Transverse colon (tissue), 4 donors: ENCODE measurements at regions of chr9 and their contacts with region 1.

Region 1: DNA sequence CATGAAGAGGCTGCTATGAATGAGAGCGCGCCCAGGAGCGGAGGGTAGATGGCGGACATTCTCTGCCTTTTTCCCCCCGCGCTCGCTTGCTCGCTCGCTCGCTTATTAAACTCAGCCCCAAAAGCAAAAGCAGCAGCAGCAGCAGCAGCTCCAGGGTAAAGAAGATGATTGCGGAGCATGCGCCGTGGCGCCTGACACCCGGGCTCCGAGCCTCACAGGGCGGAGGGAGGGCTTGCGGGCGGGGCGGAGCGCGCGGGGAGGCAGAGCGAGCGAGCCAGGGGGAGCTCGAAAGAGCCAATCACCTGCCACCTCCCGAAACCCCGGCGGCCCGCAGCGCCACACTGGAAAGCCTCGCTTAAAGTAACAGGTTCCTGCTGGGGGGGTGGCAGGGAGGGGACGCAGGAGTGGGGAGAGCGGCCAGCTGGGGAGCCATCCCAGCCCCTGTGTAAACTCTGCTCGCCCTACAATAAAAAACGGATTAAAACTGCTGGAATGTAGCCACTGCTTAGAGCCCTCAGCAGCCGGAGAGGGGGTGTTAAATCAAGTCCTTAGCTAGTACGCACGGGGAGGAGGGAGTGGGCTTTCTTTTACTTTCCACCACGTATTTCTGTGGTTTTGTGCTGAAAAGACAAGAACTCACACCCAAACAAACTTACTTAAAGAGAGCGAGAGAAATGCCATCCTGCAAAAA is at the start of gene MLLT3:
- DNase-seq: peak; percentile 97
- H3K4me3 ChIP-seq: peak within 1 kb of the TSS; percentile 74 to 94 (median 85)
- H3K27ac ChIP-seq: peak within 1 kb of the TSS; percentile 90 to 98 (median 94)
- H3K4me1 ChIP-seq: peaks cover 9 to 42% (median 25%) of the 10 kb centered on the region in 4 donors
- H3K27me3 ChIP-seq: no peaks in the 10 kb centered on the region
- CTCF ChIP-seq: peak in 2 of 5 experiments; percentile 7 to 11
- EP300 ChIP-seq: no peak
- POLR2A ChIP-seq: peak; percentile 75
- total RNA-seq, gene MLLT3: 9.4 to 38.2 (median 30.2) TPM

Region 2: GRCh38 chr9:20356403-20357035 is 266.0 kb before region 1 on chr9:
- in situ Hi-C with region 1: loop called (anchors 10 to 25 kb)
- intact Hi-C with region 1: loop called (anchors 5 kb)
- DNase-seq: peak; percentile 74
- H3K4me3 ChIP-seq: peak overlapping the region in 1 of 4 donors; percentile 23
- H3K27ac ChIP-seq: peak overlapping the region; percentile 45 to 68 (median 64)
- H3K4me1 ChIP-seq: peaks cover 0 to 22% (median 16%) of the 10 kb centered on the region in 4 donors
- H3K27me3 ChIP-seq: no peaks in the 10 kb centered on the region
- CTCF ChIP-seq: peak; percentile 55 to 72 (median 67)
- EP300 ChIP-seq: no peak
- POLR2A ChIP-seq: no peak

Region 3: DNA sequence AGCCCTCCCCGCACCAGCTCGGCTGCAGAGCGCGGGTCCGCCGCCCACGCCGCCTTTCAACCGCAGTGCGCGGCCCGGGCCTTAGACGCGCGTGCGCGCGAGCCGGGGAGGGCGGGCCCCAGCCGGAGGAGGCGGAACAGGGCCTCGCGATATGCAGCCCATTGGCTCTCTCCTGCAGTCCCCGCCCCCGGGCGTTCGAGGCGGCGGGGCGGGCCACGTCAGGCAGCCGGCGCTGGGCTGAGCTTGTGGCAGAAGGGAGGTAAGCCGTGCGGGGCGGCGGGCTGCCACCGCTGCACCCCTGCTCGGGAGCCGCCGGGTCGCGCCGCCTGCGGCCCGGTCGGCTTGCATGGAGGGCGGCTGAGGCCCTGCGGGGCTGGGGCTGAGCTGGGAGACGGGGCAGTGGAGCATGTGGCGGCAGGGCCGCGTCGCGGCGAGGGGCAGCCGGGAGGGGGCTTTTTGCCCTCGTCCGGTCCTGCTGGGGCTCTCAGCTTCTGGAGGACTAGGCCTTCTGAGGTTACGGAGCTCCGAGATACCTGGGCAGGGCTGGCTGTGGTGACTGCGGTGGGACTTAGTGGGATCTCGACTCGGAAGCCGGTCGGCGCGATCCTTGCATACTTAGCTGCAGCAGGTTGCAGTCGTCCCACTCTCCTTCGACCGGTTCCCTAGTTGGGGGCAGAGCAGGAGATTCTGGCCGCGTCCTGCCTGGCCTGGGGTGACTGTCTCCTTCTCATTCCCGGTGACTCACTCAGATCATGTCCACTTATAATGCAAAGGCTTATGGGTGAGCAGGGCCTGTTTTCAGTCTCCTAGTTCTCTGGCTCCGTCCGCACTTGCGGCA is 61.8 kb after region 1 on chr9 and contains the start of gene FOCAD:
- in situ Hi-C with region 1: no loop called
- intact Hi-C with region 1: loop called (anchors 5 kb)
- DNase-seq: peak; percentile 97
- H3K4me3 ChIP-seq: peak within 1 kb of the TSS; percentile 80 to 91 (median 82)
- H3K27ac ChIP-seq: peak within 1 kb of the TSS; percentile 91 to 98 (median 95)
- H3K4me1 ChIP-seq: peaks cover 11 to 31% (median 14%) of the 10 kb centered on the region in 4 donors
- H3K27me3 ChIP-seq: no peaks in the 10 kb centered on the region
- CTCF ChIP-seq: peak in 1 of 5 experiments; percentile 22
- EP300 ChIP-seq: no peak
- POLR2A ChIP-seq: peak; percentile 88
- total RNA-seq, gene FOCAD: 7.8 to 41.2 (median 32.0) TPM

Region 4: GRCh38 chr9:20788526-20789451 is 166.3 kb after region 1 on chr9:
- in situ Hi-C with region 1: no loop called
- intact Hi-C with region 1: no loop called
- DNase-seq: no peak
- H3K4me3 ChIP-seq: no peak overlapping the region
- H3K27ac ChIP-seq: no peak overlapping the region
- H3K4me1 ChIP-seq: no peaks in the 10 kb centered on the region
- H3K27me3 ChIP-seq: no peaks in the 10 kb centered on the region
- CTCF ChIP-seq: no peak
- EP300 ChIP-seq: no peak
- POLR2A ChIP-seq: no peak

Region 5: DNA sequence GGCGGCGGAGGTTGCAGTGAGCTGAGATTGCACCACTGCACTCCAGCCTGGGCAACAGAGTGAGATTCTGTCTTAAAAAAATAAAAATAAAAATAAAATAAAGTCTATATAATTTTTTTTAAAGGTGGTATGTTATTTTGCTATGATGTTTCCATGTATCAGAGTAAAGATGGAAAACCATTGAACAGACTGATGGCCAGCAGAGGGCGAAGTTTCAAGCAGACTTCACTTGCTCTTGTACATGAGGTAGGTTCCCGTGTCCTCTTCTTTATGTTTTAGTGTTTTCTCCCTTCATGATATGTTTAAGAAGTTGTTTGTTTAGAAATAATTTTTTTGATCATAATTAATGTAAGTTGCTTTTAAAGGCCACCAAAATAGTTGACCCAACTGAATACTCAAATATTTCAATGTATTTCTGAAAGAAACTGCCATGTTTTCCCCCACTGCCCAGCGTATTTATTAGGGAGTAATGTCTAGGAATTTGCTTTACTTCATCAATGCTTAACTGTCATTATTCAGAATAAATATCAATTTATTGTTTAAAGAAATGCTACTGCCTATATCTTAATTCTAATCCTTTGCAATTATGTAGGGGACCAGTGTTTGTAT is 262.6 kb after region 1 on chr9:
- in situ Hi-C with region 1: loop called in 3 of 4 experiments (anchors 25 kb)
- intact Hi-C with region 1: no loop called
- DNase-seq: peak; percentile 61
- H3K4me3 ChIP-seq: no peak overlapping the region
- H3K27ac ChIP-seq: no peak overlapping the region
- H3K4me1 ChIP-seq: no peaks in the 10 kb centered on the region
- H3K27me3 ChIP-seq: no peaks in the 10 kb centered on the region
- CTCF ChIP-seq: peak; percentile 51 to 74 (median 59)
- EP300 ChIP-seq: no peak
- POLR2A ChIP-seq: no peak

Region 6: DNA sequence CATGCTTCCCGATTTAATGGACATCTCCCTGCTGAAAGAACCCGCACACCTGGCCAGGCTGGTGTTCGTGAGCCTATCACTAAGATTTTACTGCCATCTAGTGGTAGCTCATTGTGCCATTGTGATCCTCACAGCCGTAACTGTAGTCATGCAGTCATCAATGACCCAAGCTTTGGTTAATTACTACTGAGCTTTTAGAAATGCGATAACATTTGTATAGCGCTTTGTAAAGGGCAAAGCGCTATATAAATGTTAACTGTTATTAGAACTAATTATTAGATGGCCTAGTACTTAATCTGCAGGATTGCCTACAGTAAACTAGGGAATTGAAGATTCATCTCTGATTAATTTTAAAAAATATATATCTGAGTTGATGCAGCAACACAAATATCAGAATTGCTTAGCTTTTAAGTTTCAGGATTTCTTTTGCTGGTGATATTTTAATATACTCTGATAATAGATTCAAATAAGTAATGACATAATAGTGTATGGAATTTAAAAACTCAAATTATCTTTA is 318.8 kb after region 1 on chr9:
- in situ Hi-C with region 1: loop called in 3 of 4 experiments (anchors 5 to 25 kb)
- intact Hi-C with region 1: loop called (anchors 10 kb)
- DNase-seq: peak; percentile 50
- H3K4me3 ChIP-seq: no peak overlapping the region
- H3K27ac ChIP-seq: no peak overlapping the region
- H3K4me1 ChIP-seq: peaks cover 0 to 3% (median 0%) of the 10 kb centered on the region in 4 donors
- H3K27me3 ChIP-seq: no peaks in the 10 kb centered on the region
- CTCF ChIP-seq: peak; percentile 72 to 83 (median 79)
- EP300 ChIP-seq: no peak
- POLR2A ChIP-seq: no peak

Region 7: GRCh38 chr9:21110708-21111576 is 488.5 kb after region 1 on chr9:
- in situ Hi-C with region 1: loop called (anchors 25 kb)
- intact Hi-C with region 1: no loop called
- DNase-seq: no peak
- H3K4me3 ChIP-seq: no peak overlapping the region
- H3K27ac ChIP-seq: no peak overlapping the region
- H3K4me1 ChIP-seq: no peaks in the 10 kb centered on the region
- H3K27me3 ChIP-seq: no peaks in the 10 kb centered on the region
- CTCF ChIP-seq: peak; percentile 65 to 81 (median 76)
- EP300 ChIP-seq: no peak
- POLR2A ChIP-seq: no peak